BJ (cell line): ENCODE measurements at regions of chr12 and their contacts with region 1.

Region 1: DNA sequence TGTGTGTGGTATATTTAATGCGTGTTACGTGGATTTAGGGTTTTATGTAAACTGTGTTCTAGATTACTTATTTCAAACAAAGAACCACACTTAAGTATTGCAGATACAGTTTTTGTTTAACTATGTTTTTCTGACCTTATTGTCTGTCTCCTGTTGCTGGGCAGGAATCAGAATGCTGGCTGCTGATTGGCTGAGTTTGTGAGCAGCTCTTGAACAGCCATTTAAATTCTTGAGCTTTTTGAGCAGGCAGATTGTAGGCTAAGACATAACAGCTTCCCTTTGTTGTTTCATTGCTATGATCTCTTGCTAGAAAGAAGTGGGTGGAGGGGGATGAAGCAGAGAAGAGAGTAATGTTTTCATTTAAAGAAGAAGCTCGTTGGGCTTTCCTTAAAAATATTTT is 52.2 kb downstream of the ATF7IP start:
- DNase-seq: peak; percentile 25
- H3K4me3 ChIP-seq: no peak overlapping the region
- H3K27me3 ChIP-seq: no peaks in the 10 kb centered on the region
- CTCF ChIP-seq: no peak

Region 2: GRCh38 chr12:14247166-14247565 is 170.5 kb before region 1 on chr12:
- CTCF ChIA-PET with region 1: no interaction called
- POLR2A ChIA-PET with region 1: no interaction called
- DNase-seq: no peak
- H3K4me3 ChIP-seq: no peak overlapping the region
- H3K27me3 ChIP-seq: no peaks in the 10 kb centered on the region
- CTCF ChIP-seq: no peak

Region 3: GRCh38 chr12:14303661-14304155 is 114.0 kb before region 1 on chr12:
- CTCF ChIA-PET with region 1: no interaction called
- POLR2A ChIA-PET with region 1: no interaction called
- DNase-seq: no peak
- H3K4me3 ChIP-seq: no peak overlapping the region
- H3K27me3 ChIP-seq: no peaks in the 10 kb centered on the region
- CTCF ChIP-seq: no peak

Region 4: DNA sequence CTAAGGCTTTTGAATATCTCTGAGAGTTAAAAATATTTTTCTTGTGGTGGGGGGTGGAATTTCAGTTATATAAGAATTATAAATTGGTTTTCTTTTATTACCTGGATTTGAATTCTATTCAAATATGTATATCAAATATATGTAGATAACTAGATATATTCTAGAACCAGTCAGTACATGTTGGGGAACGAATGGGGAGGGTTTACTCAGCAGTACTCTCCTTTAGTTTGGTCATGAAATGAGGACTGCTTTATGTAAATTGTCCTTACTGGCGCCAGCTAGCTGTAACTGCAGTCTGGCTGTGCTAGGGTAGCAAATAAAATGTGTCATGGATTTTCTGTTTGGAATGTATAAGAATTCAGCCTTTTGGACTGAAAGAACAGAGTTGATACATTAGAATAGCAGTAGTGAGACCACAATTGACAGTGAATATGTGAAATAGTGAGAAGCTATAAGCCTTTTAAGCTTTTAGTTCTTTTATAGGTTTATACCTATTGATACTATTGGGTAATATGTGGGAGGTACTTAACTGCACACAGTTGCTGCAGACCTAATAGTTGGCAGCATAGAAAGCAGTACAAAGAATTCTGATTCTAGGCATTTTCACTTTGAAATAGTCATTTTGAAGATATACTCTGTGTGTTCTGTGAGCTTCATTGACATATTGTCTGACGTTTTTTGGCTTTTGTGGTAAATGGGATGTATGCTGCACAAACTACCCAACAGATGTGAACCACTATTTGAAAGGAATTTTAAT is 23.2 kb before region 1 on chr12:
- CTCF ChIA-PET with region 1: no interaction called
- POLR2A ChIA-PET with region 1: no interaction called
- DNase-seq: no peak
- H3K4me3 ChIP-seq: no peak overlapping the region
- H3K27me3 ChIP-seq: no peaks in the 10 kb centered on the region
- CTCF ChIP-seq: no peak

Region 5: GRCh38 chr12:14454098-14454907 is 36.6 kb after region 1 on chr12:
- CTCF ChIA-PET with region 1: interaction called, 11 read pairs
- POLR2A ChIA-PET with region 1: no interaction called
- DNase-seq: no peak
- H3K4me3 ChIP-seq: no peak overlapping the region
- H3K27me3 ChIP-seq: no peaks in the 10 kb centered on the region
- CTCF ChIP-seq: peak; percentile 48

Region 6: GRCh38 chr12:14993537-14994266 is 576.0 kb after region 1 on chr12:
- CTCF ChIA-PET with region 1: no interaction called
- POLR2A ChIA-PET with region 1: no interaction called
- DNase-seq: no peak
- H3K4me3 ChIP-seq: no peak overlapping the region
- H3K27me3 ChIP-seq: no peaks in the 10 kb centered on the region
- CTCF ChIP-seq: no peak